ENCODE measurements at regions of chr16 and their contacts with region 1.

Region 1: GRCh38 chr16:11255737-11256660 is at the start of gene SOCS1:
- DNase-seq: peak; percentile 95
- H3K4me3 ChIP-seq: peak within 1 kb of the TSS; percentile 79 to 84
- H3K27ac ChIP-seq: peak within 1 kb of the TSS; percentile 86 to 94
- H3K4me1 ChIP-seq: peaks cover 9 to 27% of the 10 kb centered on the region in 2 experiments; a peak in 3 of 4 replicates
- H3K27me3 ChIP-seq: no peaks in the 10 kb centered on the region
- CTCF ChIP-seq: peak; percentile 73
- EP300 ChIP-seq: no peak
- RAD21 ChIP-seq: peak; percentile 73
- polyA plus RNA-seq, gene SOCS1: 6.3 and 8.6 TPM in 2 replicates

Region 2: GRCh38 chr16:10976634-10977033 is 279.4 kb before region 1 on chr16:
- CTCF ChIA-PET with region 1: interaction called, 318 read pairs
- POLR2A ChIA-PET with region 1: interaction called, 9 read pairs
- DNase-seq: peak; percentile 75
- H3K4me3 ChIP-seq: no peak overlapping the region
- H3K27ac ChIP-seq: peak overlapping the region in 1 of 2 experiments; percentile 63; a peak in 2 of 4 replicates
- H3K4me1 ChIP-seq: peaks cover 3 to 18% of the 10 kb centered on the region in 2 experiments; a peak in 3 of 4 replicates
- H3K27me3 ChIP-seq: no peaks in the 10 kb centered on the region
- CTCF ChIP-seq: no peak
- EP300 ChIP-seq: peak in 1 of 2 experiments; percentile 79; a peak in 2 of 4 replicates
- RAD21 ChIP-seq: peak; percentile 39; the same call in 1 of the 2 replicates

Region 3: GRCh38 chr16:11109566-11109965 is 146.4 kb before region 1 on chr16:
- CTCF ChIA-PET with region 1: interaction called, 12 read pairs
- POLR2A ChIA-PET with region 1: interaction called, 4 read pairs
- DNase-seq: no peak
- H3K4me3 ChIP-seq: no peak overlapping the region
- H3K27ac ChIP-seq: no peak overlapping the region
- H3K4me1 ChIP-seq: peaks cover 15 to 24% of the 10 kb centered on the region in 2 experiments; a peak in 2 of 4 replicates
- H3K27me3 ChIP-seq: no peaks in the 10 kb centered on the region
- CTCF ChIP-seq: no peak
- EP300 ChIP-seq: no peak
- RAD21 ChIP-seq: no peak

Region 4: DNA sequence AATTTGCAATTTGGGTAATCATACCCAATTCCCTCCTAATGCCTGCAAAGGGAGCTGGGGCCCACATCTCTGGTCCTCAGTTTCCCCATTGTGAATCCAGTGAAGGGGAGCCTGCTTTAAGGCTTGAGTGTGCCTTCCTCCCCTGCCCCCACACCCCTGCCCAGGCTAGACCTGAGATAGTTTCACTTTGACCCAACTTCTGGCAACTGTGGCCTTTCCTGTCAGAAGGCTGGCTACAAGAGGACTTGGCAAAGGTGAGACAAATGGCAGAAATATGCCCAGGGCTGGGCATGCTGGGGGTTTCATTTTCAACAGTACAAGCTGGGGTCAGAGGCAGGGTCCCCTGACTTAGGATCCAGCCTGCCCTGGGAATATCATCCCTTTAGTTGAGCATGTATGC is 10.0 kb before region 1 on chr16:
- CTCF ChIA-PET with region 1: interaction called, 16 read pairs
- POLR2A ChIA-PET with region 1: no interaction called
- DNase-seq: no peak
- H3K4me3 ChIP-seq: no peak overlapping the region
- H3K27ac ChIP-seq: no peak overlapping the region
- H3K4me1 ChIP-seq: no peaks in the 10 kb centered on the region
- H3K27me3 ChIP-seq: no peaks in the 10 kb centered on the region
- CTCF ChIP-seq: no peak
- EP300 ChIP-seq: no peak
- RAD21 ChIP-seq: no peak

Region 5: DNA sequence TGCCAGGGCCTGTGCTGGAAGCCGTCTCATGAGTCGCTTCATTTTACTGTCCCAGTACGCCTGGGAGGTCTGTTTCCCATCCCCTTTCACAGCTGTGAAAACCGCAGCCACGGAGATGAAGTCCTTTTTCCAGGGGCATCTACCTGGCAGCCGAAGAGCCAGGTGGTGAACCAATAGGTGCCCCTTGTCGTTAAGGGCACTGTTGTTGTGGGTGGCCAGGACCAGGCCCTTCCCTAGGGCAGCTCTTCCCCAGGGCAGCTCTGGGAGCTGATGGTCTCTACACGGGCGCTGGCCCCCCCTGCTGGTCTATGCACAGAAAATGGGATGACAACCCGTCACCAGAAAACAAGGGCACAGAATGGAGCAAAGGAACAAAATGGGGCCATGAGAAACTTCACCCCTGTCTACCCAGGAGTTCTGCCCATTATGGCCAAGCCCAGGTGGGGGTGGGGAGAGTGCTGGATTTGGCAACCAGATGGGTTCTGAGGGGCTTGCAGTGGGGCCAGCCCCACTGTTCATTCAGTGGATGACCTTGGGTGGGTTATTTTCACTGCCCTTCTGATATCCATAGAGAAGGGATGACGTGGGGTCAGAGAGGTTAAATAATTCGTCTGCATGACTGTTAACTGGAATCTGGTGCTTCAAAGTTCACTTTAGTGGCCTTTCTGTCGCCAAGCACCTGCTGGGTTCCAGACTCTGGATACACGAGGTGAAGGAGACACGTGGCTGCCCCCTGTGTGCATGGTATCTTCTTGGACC is 100.8 kb after region 1 on chr16:
- CTCF ChIA-PET with region 1: interaction called, 31 read pairs
- POLR2A ChIA-PET with region 1: no interaction called
- DNase-seq: peak; percentile 71
- H3K4me3 ChIP-seq: no peak overlapping the region; a peak in 1 of 4 replicates
- H3K27ac ChIP-seq: peak overlapping the region in 1 of 2 experiments; percentile 70; a peak in 2 of 4 replicates
- H3K4me1 ChIP-seq: peaks cover 15 to 26% of the 10 kb centered on the region in 2 experiments; a peak in 3 of 4 replicates
- H3K27me3 ChIP-seq: no peaks in the 10 kb centered on the region
- CTCF ChIP-seq: peak; percentile 69
- EP300 ChIP-seq: no peak
- RAD21 ChIP-seq: peak; percentile 74